ENCODE measurements at regions of chr4 and their contacts with region 1.

Region 1: DNA sequence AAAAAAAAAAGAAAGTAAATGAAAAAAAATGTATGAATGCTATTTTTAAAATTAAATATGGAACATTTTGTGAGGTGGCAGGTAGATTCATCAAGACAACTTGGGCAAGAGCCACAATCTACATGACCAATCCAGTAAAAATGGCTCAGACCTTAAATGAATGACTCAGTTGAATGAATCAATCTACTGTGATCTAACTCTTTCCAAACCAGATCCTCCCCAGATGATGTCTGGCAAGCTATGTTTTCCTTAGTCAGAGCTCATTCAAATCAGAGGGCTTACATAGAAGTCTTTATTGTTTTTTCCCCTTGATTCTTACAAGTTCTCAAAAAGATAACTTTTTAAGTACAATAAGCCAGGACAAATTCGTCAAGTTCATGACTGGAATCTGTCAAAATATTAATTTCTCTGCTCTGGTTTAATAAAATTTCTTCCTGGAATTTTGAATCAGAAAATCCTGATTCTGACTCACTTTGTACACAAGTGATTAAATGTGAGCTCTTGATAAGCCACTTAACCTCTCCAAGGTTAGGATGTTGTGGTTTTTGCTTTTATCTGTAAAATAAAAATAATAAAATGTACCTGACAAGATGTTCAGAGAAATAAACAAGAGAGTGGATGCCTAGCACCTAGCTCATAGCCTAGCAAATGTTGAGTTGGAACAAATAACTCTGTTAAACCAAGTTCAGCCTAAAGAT is 105.6 kb upstream of the SMIM31 start:
- DNase-seq: peak; percentile 83
- H3K4me3 Mint-ChIP-seq: no peak overlapping the region
- H3K27ac Mint-ChIP-seq: peak overlapping the region; percentile 75
- H3K4me1 Mint-ChIP-seq: peaks cover 11% of the 10 kb centered on the region
- H3K27me3 Mint-ChIP-seq: no peaks in the 10 kb centered on the region
- CTCF ChIP-seq: no peak

Region 2: DNA sequence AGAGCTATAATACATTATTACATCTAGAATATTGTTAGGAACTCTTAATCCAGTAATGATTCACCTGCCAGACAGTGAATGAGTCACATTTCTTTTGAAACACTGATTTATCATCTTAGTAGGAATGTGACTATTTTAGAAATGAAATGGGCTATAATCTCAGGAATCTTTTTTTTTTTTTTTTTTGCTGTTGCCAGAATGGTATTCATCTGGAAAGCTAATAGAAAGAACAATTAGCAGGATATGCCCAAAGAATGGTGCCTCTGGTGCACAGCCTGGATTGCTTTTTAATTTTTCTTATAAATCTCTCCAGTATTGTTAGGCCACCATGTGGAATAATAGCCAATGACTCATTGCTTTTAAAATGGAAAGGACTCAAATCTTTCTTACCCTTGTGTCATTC is 75.4 kb before region 1 on chr4:
- CTCF ChIA-PET with region 1: no interaction called
- POLR2A ChIA-PET with region 1: no interaction called
- intact Hi-C with region 1: loop called (anchors 2 kb)
- DNase-seq: peak; percentile 81
- H3K4me3 Mint-ChIP-seq: no peak overlapping the region
- H3K27ac Mint-ChIP-seq: peak overlapping the region; percentile 80
- H3K4me1 Mint-ChIP-seq: peaks cover 8% of the 10 kb centered on the region
- H3K27me3 Mint-ChIP-seq: no peaks in the 10 kb centered on the region
- CTCF ChIP-seq: no peak

Region 3: DNA sequence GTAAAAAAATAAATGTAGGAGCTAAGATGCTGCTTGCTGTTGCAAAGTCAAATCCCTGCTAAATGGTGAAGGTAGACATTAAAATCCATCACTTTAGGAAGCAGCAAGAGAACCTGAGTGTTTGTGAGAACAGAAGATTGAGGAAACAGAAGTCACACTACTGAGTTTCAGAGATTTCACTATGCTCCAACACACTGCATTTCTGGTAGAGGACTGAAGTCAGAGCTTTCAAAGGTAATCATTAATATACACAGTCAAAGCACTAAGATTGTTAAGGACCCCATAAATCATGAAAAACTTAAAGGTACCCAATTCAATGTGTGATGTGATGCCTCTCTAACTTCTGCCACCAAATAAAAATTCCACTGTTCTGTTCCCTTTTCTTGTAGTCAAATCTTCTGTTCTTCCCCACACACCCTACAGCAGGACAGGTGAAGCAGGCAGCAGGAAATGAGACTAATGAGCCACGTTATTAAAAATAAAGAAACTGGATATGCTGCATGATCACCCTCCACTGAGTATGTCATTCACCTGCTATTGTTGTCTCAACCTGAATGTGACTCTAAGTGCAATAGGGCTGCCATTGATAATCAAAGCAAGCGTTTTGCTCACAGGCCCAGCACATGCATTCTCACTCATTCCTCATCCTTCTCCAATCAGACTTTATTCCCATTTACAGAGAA is 199.8 kb after region 1 on chr4:
- CTCF ChIA-PET with region 1: no interaction called
- POLR2A ChIA-PET with region 1: no interaction called
- intact Hi-C with region 1: no loop called
- DNase-seq: no peak
- H3K4me3 Mint-ChIP-seq: no peak overlapping the region
- H3K27ac Mint-ChIP-seq: no peak overlapping the region
- H3K4me1 Mint-ChIP-seq: no peaks in the 10 kb centered on the region
- H3K27me3 Mint-ChIP-seq: no peaks in the 10 kb centered on the region
- CTCF ChIP-seq: no peak